GM18951 (cell line): ENCODE measurements at regions of chr17 and their contacts with region 1.

Region 1: GRCh38 chr17:54992797-54993639 is 24.5 kb downstream of the STXBP4 start:
- POLR2A ChIP-seq: no peak

Region 2: DNA sequence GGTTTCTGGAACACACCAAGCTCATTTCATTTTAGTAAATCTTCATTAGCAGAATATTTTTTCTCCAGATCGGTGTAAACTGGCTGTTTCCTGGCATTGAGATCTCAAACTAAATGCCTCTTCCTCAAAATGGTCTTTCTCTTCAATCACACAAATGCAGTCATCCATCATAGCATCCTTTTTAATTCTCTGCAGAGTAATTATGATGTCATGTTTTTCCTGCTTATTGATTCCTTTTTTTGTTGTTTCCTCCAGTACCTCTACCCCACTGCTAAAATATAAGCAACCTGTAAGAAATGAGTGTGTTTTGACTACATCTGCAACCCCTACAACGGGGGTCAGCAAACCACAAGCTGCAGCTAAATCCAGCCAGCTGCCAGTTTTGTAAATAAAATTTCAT is 158.0 kb before region 1 on chr17:
- in situ Hi-C with region 1: no loop called
- POLR2A ChIP-seq: no peak

Region 3: DNA sequence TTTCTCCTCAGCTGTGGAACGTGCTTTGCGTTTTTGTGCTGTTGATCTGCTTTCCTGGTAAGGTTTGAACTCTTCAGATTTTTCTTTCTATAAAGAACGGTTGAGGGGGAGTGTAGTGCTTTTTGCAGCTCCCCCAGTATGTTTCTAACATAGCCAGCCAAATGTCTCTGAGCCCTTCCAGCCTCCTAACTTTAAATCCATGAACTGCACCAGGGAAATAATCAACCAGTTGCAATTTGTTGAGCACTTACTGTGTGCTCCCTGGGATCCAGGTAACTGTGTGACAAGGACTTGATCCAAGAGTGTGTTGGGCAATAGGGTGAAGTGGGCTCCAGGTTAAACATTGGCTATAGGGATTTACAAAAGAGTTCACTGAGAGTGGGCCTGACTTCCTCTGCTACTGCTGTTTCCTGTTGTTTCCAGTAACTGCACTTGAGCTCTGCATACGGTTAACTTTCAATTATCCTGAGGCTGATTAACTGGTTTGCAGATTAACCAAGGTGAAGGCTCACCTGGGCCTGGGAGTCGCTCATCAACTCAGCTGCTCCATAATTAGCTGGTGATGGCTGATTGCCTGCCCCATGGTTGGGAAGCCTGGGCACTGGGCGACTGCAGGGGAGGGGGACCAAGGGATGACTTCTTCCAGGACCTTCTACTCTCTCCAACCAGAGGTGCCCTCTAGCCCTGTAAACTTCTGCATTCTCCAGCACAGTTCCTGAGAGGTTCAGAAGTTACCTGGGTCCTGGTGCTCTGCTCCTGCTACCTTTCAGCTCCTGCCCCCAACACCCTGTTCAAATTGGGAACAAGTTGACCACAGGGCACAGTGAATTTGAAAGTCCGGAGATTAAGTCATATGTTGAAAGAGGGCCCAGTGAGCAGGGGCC is 291.2 kb after region 1 on chr17:
- in situ Hi-C with region 1: no loop called
- POLR2A ChIP-seq: no peak

Region 4: DNA sequence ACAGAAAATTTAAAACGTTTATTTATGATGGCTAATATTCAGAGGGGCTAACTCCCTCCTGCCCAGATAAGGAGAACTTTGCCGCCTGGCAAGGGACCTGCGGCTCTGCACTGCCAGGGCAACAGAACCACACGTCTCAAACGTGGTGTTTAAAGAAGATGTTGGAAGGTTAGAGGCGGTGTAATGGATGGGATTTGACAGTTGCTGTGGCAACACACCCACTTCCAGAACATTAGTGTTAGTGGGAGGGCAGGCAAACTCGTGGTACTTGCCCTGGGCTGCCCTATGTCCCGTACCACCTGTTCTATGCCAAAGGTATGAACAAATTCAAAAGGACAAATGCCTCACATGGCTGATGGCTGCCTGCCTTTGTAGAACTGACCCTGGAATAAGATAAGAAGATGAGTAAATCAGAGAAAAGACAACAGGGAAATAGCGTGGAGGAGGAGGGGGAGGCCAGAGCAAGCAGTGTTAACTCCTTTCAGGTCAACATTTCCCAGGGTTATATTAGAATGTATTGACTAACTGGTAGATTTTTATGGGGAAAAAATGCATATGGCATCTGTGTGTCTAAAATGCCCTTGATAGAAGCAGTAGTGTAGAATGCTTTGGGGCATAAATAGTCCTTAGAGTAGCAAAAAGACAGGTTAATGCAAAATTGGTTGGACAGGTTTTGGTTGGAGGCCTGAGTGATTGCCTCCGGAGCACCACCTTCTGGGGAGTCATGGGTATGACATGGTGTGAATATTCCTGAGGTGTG is 302.6 kb after region 1 on chr17:
- in situ Hi-C with region 1: loop called (anchors 10 kb)
- POLR2A ChIP-seq: no peak